Astrocyte of the cerebellum (primary cell): ENCODE measurements at regions of chr9 and their contacts with region 1.

Region 1: GRCh38 chr9:127937388-127938280 is at the start of gene DPM2:
- DNase-seq: no peak
- H3K4me3 ChIP-seq: peak within 1 kb of the TSS; percentile 90
- CTCF ChIP-seq: no peak

Region 2: DNA sequence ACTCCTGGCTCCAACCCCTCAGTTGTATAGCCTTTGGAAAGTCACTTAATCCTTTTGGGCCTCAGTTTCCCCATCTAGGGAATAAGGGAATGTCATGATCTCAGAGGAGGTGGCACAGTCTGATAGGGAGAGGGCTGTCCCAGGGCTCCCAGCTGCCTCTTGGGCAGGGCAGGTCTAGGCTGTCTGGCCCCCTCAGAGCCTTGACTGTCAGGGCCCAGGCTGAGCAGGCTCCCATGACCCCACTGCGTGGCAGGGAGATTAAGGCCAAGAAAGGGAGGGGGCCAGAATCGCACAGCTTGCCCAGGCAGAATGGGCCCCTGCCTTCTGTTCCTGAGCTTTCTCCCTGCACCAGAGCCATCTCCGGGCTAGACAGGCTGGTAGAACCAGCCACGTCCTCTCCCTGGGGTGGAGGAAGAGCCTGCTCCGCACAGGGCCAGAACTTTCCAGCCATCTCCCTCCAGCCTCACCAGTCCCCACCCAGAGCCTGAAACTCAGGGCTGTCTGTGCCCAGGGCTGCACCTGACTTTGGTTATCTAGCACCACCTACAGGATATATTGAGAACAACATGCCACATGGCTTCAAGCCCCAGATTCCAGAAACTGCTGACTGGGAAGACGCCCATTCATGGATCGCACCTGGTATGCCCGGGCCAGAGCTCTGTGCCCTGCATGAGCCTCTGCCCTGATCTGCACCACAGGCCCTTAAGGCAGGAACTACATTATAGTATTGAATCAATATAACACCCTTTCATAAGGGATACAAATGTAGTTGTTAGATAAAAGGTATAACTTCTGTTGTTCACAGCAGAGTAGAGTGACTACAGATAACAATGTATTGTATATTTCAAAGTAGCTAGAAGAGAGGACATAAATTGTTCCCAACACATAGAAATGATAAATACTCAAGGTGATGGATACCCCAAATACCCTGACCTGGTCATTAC is 97.5 kb after region 1 on chr9:
- in situ Hi-C with region 1: no loop called
- DNase-seq: peak; percentile 49
- H3K4me3 ChIP-seq: no peak overlapping the region
- CTCF ChIP-seq: peak; percentile 69

Region 3: DNA sequence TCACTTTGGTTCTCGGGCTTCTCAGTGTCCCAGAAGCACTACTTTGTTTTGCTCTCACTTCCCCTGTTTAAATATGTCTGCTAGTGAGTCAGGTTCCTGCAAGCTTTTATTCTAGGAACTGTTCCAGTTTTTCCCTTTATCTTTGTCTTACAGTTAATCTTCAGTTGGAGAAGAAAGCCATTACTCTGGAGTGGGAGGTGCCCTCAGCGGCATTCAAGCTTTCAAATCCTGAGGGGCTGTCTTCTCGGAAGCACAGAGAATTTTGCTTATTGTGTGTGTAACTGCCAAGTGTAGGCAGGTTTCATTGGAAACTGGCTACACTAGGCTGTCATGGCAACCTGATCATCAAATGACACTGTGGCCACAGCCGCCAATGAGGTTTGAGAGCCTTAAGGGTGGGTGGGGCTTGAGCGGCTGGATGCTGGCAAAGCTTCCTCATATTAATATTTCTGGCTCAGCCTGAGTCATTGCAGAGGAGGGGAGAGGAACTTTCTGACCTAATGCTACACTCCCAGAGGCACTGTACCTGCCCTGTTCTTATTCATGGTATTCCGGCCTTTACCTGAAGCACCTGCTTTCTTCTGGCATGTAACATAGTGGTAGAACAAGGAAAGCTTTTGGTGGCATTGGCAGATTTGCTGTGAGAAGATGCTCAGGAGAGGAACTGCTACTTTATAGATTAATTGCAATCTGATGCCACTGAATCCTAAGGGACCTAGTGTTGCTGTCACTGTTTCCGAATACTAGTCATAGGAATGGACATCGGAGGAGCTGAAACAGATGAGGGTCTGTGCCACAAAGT is 156.7 kb after region 1 on chr9:
- in situ Hi-C with region 1: loop called (anchors 10 kb)
- DNase-seq: peak; percentile 97
- H3K4me3 ChIP-seq: peak overlapping the region; percentile 49
- CTCF ChIP-seq: no peak